Activated naive CD8-positive, alpha-beta T cell treated with anti-CD3 and anti-CD28 coated beads, Interleukin-2, amount 10 ng/mL, durations not matched to agents 7 days and 5 days (primary cell): ENCODE measurements at regions of chr1 and their contacts with region 1.

Region 1: DNA sequence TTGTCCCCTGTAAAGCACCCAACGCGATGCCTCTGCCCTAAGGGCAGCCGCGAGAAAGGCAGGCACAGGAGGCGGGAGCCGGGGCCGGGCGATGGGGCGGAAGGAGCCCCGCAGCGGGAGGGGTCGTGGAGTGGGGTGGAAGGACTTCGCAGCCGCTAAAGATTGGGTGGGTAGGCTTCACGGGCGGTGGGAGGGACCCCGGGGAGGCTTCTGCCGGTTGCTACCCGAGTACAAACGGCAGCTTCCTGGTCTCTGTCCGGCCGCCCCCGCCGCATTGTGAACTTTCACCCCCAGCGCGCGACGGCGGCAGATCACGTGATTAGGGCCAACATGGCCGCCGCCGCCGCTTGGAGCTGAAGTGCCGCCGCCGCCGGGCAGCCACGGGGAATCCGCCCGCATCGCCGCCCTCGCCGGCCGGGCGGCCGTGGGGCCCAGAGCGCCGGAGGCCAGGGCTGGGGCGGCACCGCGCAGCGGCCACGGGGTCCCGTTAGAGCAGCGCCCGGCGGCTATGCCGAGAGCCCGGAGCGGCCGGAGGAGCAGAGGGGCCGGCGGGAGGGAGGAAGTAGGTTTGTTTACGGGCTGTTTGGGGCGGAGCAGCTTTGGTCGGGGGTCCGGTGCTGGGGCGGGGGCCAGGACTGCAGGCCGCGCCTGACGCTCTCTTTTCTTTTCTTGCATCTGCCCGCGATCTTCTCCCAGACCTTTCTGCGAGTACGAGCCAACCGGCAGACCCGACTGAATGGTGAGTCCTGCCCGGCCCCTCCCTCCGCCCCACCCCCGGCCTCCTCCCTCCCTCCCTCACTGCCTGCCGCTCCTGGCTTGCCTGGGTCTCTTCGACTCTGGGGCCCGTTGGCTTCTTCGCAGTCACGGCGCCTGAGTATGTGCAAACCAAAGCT is 42.4 kb downstream of the TMEM53 start:
- DNase-seq: peak; percentile 95
- ATAC-seq: peak; percentile 76
- H3K4me3 Mint-ChIP-seq: peak overlapping the region; percentile 93
- H3K27ac Mint-ChIP-seq: peak overlapping the region; percentile 95
- H3K4me1 Mint-ChIP-seq: peaks cover 20% of the 10 kb centered on the region
- H3K27me3 Mint-ChIP-seq: no peaks in the 10 kb centered on the region

Region 2: GRCh38 chr1:44213222-44214112 is 418.4 kb before region 1 on chr1 and contains the start of gene DMAP1:
- POLR2A ChIA-PET with region 1: interaction called, 10 read pairs
- DNase-seq: peak; percentile 92
- ATAC-seq: peak; percentile 84
- H3K4me3 Mint-ChIP-seq: peak within 1 kb of the TSS; percentile 95
- H3K27ac Mint-ChIP-seq: peak within 1 kb of the TSS; percentile 93
- H3K4me1 Mint-ChIP-seq: peaks cover 15% of the 10 kb centered on the region
- H3K27me3 Mint-ChIP-seq: no peaks in the 10 kb centered on the region
- total RNA-seq, gene DMAP1: 53.3 to 58.6 TPM

Region 3: DNA sequence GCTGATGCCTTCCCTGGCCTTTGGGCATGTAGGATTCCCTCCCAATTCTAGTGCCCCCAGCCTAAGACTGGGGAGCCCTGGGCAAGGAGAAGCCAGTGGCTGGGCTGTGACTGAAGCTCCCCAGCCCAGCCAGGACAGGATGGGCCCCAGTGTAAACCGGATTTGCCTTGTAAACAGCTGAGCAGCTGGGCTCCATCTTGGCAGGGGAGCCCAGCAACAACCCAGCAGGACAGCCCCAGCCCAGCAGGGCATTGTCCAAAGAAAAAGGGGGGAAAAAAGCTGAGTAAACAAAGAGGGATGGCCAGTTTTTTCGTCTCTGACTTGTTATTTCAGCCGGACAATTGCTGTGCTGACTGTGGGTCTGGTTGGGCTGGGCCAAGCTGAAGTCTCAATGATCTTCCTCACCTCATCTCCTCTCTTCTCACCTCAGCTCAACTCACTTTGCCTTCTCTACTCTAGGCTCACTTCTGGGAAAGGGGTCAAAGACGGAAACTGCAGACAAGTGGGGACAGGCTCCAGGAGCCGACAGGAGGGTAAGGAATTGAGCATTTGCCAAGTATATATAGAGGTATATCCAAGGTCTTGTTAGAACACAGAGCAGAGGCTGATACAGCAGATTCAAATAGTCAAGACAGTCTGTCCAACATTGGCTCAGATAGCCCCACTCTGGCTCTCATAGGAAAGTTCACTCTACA is 55.3 kb before region 1 on chr1:
- POLR2A ChIA-PET with region 1: no interaction called
- DNase-seq: no peak
- ATAC-seq: no peak
- H3K4me3 Mint-ChIP-seq: no peak overlapping the region
- H3K27ac Mint-ChIP-seq: no peak overlapping the region
- H3K4me1 Mint-ChIP-seq: no peaks in the 10 kb centered on the region
- H3K27me3 Mint-ChIP-seq: peaks cover 14% of the 10 kb centered on the region

Region 4: GRCh38 chr1:44652445-44653106 is 20.7 kb after region 1 on chr1:
- POLR2A ChIA-PET with region 1: interaction called, 14 read pairs
- DNase-seq: peak; percentile 82
- ATAC-seq: peak; percentile 73
- H3K4me3 Mint-ChIP-seq: no peak overlapping the region
- H3K27ac Mint-ChIP-seq: peak overlapping the region; percentile 67
- H3K4me1 Mint-ChIP-seq: peaks cover 2% of the 10 kb centered on the region
- H3K27me3 Mint-ChIP-seq: no peaks in the 10 kb centered on the region

Region 5: GRCh38 chr1:44664730-44665370 is 33.0 kb after region 1 on chr1:
- POLR2A ChIA-PET with region 1: interaction called, 11 read pairs
- DNase-seq: no peak
- ATAC-seq: peak; percentile 84
- H3K4me3 Mint-ChIP-seq: peak overlapping the region; percentile 32
- H3K27ac Mint-ChIP-seq: peak overlapping the region; percentile 66
- H3K4me1 Mint-ChIP-seq: peaks cover 7% of the 10 kb centered on the region
- H3K27me3 Mint-ChIP-seq: no peaks in the 10 kb centered on the region

Region 6: DNA sequence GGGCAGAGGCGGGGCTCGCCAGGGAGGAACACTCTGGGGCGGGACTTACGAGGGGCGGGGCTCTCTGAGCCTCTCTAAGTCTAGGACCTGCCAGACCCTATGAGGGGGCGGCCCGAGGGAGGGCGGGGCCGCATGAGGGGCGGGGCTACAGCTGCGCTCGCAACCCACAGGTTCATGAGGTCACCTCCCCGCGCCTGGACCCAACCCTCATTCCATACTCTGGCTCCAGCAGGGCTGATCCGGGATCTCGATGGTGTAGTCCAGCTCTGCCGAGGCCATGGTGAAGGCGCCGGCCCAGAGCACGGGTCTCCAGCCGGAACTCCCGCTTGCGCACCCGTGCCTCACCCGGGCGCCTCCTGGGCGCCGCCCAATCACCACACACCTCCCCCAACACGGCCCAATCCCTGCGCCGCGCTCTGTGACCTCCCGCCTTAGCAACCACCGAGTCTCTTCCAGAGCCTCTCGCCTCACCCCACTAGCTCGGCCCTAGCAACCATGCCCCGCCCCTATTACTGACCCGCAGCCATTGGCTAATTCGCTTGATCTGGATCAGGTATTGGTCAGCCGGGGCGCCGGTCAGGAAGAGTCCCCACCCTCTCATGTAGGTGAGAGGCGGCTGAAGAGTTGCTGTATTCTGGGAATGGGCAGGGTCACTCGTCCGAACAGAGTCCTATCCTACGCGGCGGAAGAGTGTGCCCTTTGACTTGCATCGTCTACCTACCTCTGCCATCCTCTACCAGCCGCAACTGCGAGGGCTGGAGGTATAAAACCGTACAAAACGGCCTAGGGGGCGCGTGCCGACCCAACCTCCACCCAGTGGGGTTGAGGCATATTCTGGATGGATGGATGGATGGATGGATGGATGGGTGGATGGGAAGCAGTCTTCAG is 42.5 kb after region 1 on chr1 and contains the starts of genes ARMH1 and TMEM53:
- POLR2A ChIA-PET with region 1: interaction called, 29 read pairs
- DNase-seq: peak; percentile 98
- ATAC-seq: peak; percentile 96
- H3K4me3 Mint-ChIP-seq: peak within 1 kb of the TSS; percentile 89
- H3K27ac Mint-ChIP-seq: peak within 1 kb of the TSS; percentile 82
- H3K4me1 Mint-ChIP-seq: peaks cover 18% of the 10 kb centered on the region
- H3K27me3 Mint-ChIP-seq: no peaks in the 10 kb centered on the region
- total RNA-seq, gene ARMH1: 95.7 to 105 TPM
- total RNA-seq, gene TMEM53: 4.2 to 4.7 TPM